Activated T-helper 1 cell treated with anti-CD3 and anti-CD28 coated beads, Interleukin-12 subunit alpha, Interleukin-12 subunit beta, Interleukin-2, Interleukin-4 antibody, amounts not matched to agents 30 ng/mL and 10 ng/mL and 1 ng/mL, durations not matched to agents 14 hours and 24 hours and 36 hours (primary cell): ENCODE measurements at regions of chr22 and their contacts with region 1.

Region 1: GRCh38 chr22:22687638-22688500 is 43.5 kb downstream of the GGTLC2 start:
- DNase-seq: peak; percentile 6
- H3K4me3 Mint-ChIP-seq: no peak overlapping the region
- H3K27ac Mint-ChIP-seq: no peak overlapping the region
- H3K4me1 Mint-ChIP-seq: no peaks in the 10 kb centered on the region
- H3K27me3 Mint-ChIP-seq: no peaks in the 10 kb centered on the region

Region 2: GRCh38 chr22:22463855-22464540 is 223.9 kb before region 1 on chr22:
- intact Hi-C with region 1: loop called (anchors 2 kb)
- DNase-seq: peak; percentile 23
- H3K4me3 Mint-ChIP-seq: no peak overlapping the region
- H3K27ac Mint-ChIP-seq: no peak overlapping the region
- H3K4me1 Mint-ChIP-seq: no peaks in the 10 kb centered on the region
- H3K27me3 Mint-ChIP-seq: peaks cover 20% of the 10 kb centered on the region

Region 3: GRCh38 chr22:22587577-22588188 is 100.2 kb before region 1 on chr22:
- intact Hi-C with region 1: loop called (anchors 2 kb)
- DNase-seq: no peak
- H3K4me3 Mint-ChIP-seq: no peak overlapping the region
- H3K27ac Mint-ChIP-seq: no peak overlapping the region
- H3K4me1 Mint-ChIP-seq: no peaks in the 10 kb centered on the region
- H3K27me3 Mint-ChIP-seq: peaks cover 3% of the 10 kb centered on the region

Region 4: GRCh38 chr22:22593964-22594656 is 93.8 kb before region 1 on chr22:
- intact Hi-C with region 1: loop called (anchors 1 kb)
- DNase-seq: peak; percentile 25
- H3K4me3 Mint-ChIP-seq: no peak overlapping the region
- H3K27ac Mint-ChIP-seq: no peak overlapping the region
- H3K4me1 Mint-ChIP-seq: no peaks in the 10 kb centered on the region
- H3K27me3 Mint-ChIP-seq: peaks cover 6% of the 10 kb centered on the region

Region 5: GRCh38 chr22:22748297-22748743 is 60.5 kb after region 1 on chr22:
- intact Hi-C with region 1: loop called (anchors 1 kb)
- DNase-seq: no peak
- H3K4me3 Mint-ChIP-seq: no peak overlapping the region
- H3K27ac Mint-ChIP-seq: no peak overlapping the region
- H3K4me1 Mint-ChIP-seq: peaks cover 2% of the 10 kb centered on the region
- H3K27me3 Mint-ChIP-seq: peaks cover 10% of the 10 kb centered on the region